ENCODE measurements at regions of chr5 and their contacts with region 1.

Region 1: GRCh38 chr5:142134331-142135010 is 25.9 kb downstream of the NDFIP1 start:
- DNase-seq: no peak
- ATAC-seq: no peak
- H3K4me3 ChIP-seq: no peak overlapping the region
- H3K27ac ChIP-seq: no peak overlapping the region
- H3K4me1 ChIP-seq: no peaks in the 10 kb centered on the region
- H3K27me3 ChIP-seq: no peaks in the 10 kb centered on the region
- CTCF ChIP-seq: no peak

Region 2: DNA sequence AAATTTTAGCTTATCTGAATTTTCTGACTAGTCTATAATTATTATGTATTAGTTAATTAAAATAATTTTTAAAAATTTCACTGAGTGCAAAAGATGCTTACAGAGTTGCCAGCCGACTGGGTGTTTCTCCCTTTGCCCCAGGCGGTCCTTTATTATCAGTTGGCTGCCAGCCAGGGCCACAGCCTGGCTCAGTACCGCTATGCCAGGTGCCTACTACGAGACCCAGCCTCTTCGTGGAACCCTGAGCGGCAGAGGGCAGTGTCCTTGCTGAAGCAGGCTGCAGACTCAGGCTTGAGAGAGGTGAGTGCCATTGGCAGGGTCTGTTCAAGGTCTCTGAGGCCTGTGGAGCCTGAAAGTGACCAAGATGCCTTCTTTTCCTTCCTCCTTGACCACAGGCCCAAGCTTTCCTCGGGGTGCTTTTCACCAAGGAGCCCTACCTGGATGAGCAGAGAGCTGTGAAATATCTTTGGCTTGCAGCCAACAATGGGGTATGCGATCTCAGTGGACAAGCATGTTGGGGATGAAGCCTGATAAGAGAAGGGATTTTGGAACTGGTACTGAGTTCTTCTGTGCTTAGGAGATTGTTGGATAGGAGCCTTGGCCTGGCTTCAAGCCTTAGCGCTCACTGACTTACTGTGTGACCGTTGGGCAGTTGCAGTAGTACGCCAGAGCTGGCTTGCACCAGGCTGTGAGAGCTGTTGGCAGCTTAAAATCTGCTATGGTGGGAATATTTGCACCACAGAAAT is 200.2 kb before region 1 on chr5:
- intact Hi-C with region 1: no loop called
- DNase-seq: peak in 1 of 2 donors; percentile 37
- ATAC-seq: peak in 3 of 4 donors; percentile 65 to 69 (median 65)
- H3K4me3 ChIP-seq: no peak overlapping the region
- H3K27ac ChIP-seq: no peak overlapping the region
- H3K4me1 ChIP-seq: no peaks in the 10 kb centered on the region
- H3K27me3 ChIP-seq: no peaks in the 10 kb centered on the region
- CTCF ChIP-seq: no peak

Region 3: GRCh38 chr5:142006363-142007236 is 127.9 kb before region 1 on chr5:
- intact Hi-C with region 1: loop called in 1 of 2 experiments (anchors 5 kb)
- DNase-seq: no peak
- ATAC-seq: peak in 2 of 4 donors; percentile 18 to 31
- H3K4me3 ChIP-seq: no peak overlapping the region
- H3K27ac ChIP-seq: no peak overlapping the region
- H3K4me1 ChIP-seq: no peaks in the 10 kb centered on the region
- H3K27me3 ChIP-seq: no peaks in the 10 kb centered on the region
- CTCF ChIP-seq: no peak

Measured in psoas muscle (tissue), 8 donors.